G401 (cell line): ENCODE measurements at regions of chr1 and their contacts with region 1.

Region 1: DNA sequence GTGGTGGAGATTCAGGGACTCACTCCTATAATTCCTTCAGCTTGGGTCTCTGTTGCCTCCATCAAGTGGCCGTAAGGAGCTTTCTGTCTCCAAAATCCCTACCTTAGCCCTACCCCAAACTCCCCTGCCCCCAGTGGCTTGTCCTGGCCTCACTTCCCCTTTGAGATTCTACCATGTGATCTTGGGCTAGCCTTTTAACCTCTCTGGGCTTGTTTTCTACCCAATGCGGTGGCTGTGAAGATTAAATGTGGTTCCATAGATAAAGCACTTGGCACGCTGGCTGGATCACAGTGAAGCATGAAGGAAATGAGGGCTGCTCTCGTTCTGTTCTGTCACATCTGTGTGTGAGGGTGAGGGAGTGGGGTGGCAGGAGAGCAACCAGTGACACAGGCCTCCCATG is 43.6 kb downstream of the FAAH start:
- DNase-seq: no peak

Region 2: DNA sequence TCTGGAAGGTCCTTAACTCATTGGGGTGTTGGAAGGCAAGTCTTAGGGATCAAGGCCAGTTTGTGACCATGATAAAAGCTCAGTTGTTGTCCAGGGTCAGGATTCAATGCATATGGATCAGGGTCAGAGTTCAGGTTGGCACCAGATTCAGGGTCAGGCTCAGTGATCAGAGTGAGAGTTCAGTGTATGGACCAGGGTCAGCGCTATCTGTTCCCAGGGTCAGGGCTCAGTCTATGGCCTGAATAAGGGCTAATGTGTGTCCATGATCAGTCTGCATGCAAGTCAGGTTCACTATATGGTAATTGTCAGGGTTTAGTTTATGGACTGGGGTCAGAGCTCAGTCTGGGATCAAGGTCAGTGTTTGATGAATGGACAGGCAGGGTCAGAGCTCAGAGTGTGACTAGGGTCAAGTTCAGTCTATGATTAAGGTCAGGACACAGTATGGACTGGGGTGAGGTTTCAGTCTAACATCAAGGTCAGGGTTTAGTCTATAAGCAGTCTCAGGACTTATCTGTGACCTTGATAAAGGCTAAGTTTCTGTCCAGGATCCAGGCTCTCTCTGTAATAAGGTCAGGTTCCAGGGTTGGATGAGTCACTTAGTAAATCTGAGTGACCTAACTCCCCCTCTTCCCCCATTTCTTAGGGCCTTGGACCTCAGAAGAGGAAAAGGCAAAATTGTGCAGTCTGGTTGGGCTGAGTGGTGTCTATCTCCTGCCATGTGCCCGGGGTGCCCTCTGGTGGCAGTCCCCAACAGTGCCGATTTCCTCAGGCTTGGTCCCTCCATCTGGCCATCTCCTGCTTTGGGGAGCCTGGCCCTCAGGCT is 90.0 kb after region 1 on chr1:
- in situ Hi-C with region 1: loop called (anchors 10 kb)
- DNase-seq: peak; percentile 85

Region 3: GRCh38 chr1:46667782-46668760 is 230.3 kb after region 1 on chr1 and contains the start of gene ATPAF1:
- in situ Hi-C with region 1: no loop called
- DNase-seq: peak; percentile 79
- total RNA-seq, gene ATPAF1: 96.9 and 115 TPM in 2 replicates

Region 4: DNA sequence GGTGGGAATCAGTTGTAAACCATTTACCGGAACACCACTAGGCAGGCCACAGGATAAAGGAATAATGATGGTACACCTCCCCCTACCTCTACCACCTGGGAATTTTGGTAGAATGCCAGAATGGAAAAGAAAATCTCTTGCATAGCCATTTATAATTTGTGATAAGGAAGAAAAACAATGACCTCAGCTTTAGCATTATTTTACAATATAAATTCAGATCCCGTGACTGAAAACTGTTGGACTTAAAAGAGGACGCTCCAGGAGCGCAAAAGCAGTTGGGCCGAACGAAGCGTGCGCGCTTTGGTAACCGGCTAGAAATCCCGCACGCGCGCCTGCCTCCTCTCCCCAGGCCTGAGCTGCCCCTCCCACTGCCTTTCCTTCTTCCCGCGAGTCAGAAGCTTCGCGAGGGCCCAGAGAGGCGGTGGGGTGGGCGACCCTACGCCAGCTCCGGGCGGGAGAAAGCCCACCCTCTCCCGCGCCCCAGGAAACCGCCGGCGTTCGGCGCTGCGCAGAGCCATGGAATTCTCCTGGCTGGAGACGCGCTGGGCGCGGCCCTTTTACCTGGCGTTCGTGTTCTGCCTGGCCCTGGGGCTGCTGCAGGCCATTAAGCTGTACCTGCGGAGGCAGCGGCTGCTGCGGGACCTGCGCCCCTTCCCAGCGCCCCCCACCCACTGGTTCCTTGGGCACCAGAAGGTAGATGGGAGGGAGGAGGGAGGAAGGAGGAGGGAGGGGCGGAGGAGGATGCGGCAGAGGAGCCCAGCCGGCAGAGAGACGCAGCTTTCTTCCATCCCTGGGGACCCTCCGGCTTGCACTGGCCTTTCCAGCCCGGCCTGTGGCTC is 585.8 kb after region 1 on chr1 and contains the start of gene CYP4X1:
- in situ Hi-C with region 1: no loop called
- DNase-seq: peak; percentile 58
- total RNA-seq, gene CYP4X1: not detected in 2 replicates